PC-9 (cell line): ENCODE measurements at regions of chr17 and their contacts with region 1.

Region 1: GRCh38 chr17:17994271-17995069 is 21.8 kb downstream of the DRC3 start:
- DNase-seq: no peak
- H3K4me3 ChIP-seq: no peak overlapping the region
- H3K27ac ChIP-seq: no peak overlapping the region
- H3K4me1 ChIP-seq: peaks cover 22% of the 10 kb centered on the region
- H3K27me3 ChIP-seq: no peaks in the 10 kb centered on the region
- CTCF ChIP-seq: peak; percentile 31; the same call in 1 of the 2 replicates

Region 2: GRCh38 chr17:17855976-17856375 is 138.5 kb before region 1 on chr17:
- CTCF ChIA-PET with region 1: no interaction called
- POLR2A ChIA-PET with region 1: no interaction called
- intact Hi-C with region 1: no loop called
- DNase-seq: no peak
- H3K4me3 ChIP-seq: no peak overlapping the region
- H3K27ac ChIP-seq: no peak overlapping the region
- H3K4me1 ChIP-seq: peaks cover 49% of the 10 kb centered on the region
- H3K27me3 ChIP-seq: no peaks in the 10 kb centered on the region
- CTCF ChIP-seq: no peak

Region 3: GRCh38 chr17:18004884-18005305 is 10.4 kb after region 1 on chr17:
- CTCF ChIA-PET with region 1: no interaction called
- POLR2A ChIA-PET with region 1: interaction called, 16 read pairs
- intact Hi-C with region 1: loop called (anchors 2 kb)
- DNase-seq: no peak
- H3K4me3 ChIP-seq: no peak overlapping the region
- H3K27ac ChIP-seq: peak overlapping the region; percentile 22; the same call in 1 of the 2 replicates
- H3K4me1 ChIP-seq: peaks cover 54% of the 10 kb centered on the region
- H3K27me3 ChIP-seq: no peaks in the 10 kb centered on the region
- CTCF ChIP-seq: peak; percentile 31